ENCODE measurements at regions of chr9 and their contacts with region 1.

Region 1: GRCh38 chr9:100028201-100028784 is 70.5 kb downstream of the ERP44 start:
- DNase-seq: peak; percentile 60
- H3K4me3 Mint-ChIP-seq: no peak overlapping the region
- H3K27ac Mint-ChIP-seq: no peak overlapping the region
- H3K4me1 Mint-ChIP-seq: no peaks in the 10 kb centered on the region
- H3K27me3 Mint-ChIP-seq: no peaks in the 10 kb centered on the region
- CTCF ChIP-seq: peak; percentile 69

Region 2: DNA sequence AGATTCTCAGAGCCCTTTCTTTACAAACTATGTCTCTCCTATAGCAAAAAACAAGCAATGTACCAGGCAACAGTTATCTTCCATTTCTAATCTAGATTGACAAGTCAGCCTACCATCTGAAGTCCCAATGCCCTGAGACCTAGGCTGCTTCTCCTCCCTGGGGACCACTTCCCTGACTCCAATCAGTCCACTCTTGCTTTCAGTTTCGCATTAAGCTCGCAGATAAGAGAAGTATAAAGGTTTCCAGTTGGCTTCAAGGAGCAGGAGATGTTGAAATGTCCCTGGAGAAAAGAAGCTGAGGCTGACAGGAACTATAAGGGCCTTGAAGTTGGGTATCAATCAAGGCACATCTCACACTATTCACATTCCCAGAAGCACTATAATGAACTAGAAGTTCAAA is 38.2 kb after region 1 on chr9:
- CTCF ChIA-PET with region 1: no interaction called
- intact Hi-C with region 1: no loop called
- DNase-seq: no peak
- H3K4me3 Mint-ChIP-seq: no peak overlapping the region
- H3K27ac Mint-ChIP-seq: no peak overlapping the region
- H3K4me1 Mint-ChIP-seq: no peaks in the 10 kb centered on the region
- H3K27me3 Mint-ChIP-seq: no peaks in the 10 kb centered on the region
- CTCF ChIP-seq: no peak

Region 3: GRCh38 chr9:100098887-100099721 is 70.8 kb after region 1 on chr9 and contains the starts of genes ERP44 and INVS:
- CTCF ChIA-PET with region 1: no interaction called
- intact Hi-C with region 1: loop called (anchors 5 kb)
- DNase-seq: peak; percentile 95
- H3K4me3 Mint-ChIP-seq: peak within 1 kb of the TSS; percentile 98
- H3K27ac Mint-ChIP-seq: peak within 1 kb of the TSS; percentile 94
- H3K4me1 Mint-ChIP-seq: peaks cover 11% of the 10 kb centered on the region
- H3K27me3 Mint-ChIP-seq: no peaks in the 10 kb centered on the region
- CTCF ChIP-seq: no peak
- total RNA-seq, gene ERP44: 12.3 and 13.2 TPM in 2 replicates
- total RNA-seq, gene INVS: 12.4 and 14.2 TPM in 2 replicates

Region 4: DNA sequence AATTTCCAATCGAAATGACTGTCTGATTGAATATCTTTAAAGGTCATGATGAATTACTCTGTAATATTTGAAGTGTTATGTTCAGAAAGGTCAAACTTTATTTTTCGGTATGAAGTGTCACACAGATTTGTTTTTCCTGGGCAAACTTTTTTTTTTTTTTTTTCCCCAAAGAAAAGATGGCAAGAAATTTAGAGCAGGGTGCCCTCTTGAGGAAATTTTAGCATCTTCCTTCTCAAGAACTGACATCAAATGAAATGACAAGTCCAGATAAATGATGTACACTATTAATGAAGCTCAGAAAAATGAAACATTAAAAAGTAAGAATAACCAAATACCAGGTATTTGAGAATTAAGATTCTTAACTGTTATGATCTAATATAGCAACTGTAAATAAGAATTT is 194.4 kb after region 1 on chr9:
- CTCF ChIA-PET with region 1: no interaction called
- intact Hi-C with region 1: loop called (anchors 1 kb)
- DNase-seq: no peak
- H3K4me3 Mint-ChIP-seq: no peak overlapping the region
- H3K27ac Mint-ChIP-seq: no peak overlapping the region
- H3K4me1 Mint-ChIP-seq: no peaks in the 10 kb centered on the region
- H3K27me3 Mint-ChIP-seq: no peaks in the 10 kb centered on the region
- CTCF ChIP-seq: no peak

Region 5: GRCh38 chr9:100322954-100323536 is 294.8 kb after region 1 on chr9:
- CTCF ChIA-PET with region 1: no interaction called
- intact Hi-C with region 1: loop called (anchors 5 kb)
- DNase-seq: peak; percentile 2
- H3K4me3 Mint-ChIP-seq: no peak overlapping the region
- H3K27ac Mint-ChIP-seq: no peak overlapping the region
- H3K4me1 Mint-ChIP-seq: no peaks in the 10 kb centered on the region
- H3K27me3 Mint-ChIP-seq: no peaks in the 10 kb centered on the region
- CTCF ChIP-seq: peak; percentile 16

Region 6: DNA sequence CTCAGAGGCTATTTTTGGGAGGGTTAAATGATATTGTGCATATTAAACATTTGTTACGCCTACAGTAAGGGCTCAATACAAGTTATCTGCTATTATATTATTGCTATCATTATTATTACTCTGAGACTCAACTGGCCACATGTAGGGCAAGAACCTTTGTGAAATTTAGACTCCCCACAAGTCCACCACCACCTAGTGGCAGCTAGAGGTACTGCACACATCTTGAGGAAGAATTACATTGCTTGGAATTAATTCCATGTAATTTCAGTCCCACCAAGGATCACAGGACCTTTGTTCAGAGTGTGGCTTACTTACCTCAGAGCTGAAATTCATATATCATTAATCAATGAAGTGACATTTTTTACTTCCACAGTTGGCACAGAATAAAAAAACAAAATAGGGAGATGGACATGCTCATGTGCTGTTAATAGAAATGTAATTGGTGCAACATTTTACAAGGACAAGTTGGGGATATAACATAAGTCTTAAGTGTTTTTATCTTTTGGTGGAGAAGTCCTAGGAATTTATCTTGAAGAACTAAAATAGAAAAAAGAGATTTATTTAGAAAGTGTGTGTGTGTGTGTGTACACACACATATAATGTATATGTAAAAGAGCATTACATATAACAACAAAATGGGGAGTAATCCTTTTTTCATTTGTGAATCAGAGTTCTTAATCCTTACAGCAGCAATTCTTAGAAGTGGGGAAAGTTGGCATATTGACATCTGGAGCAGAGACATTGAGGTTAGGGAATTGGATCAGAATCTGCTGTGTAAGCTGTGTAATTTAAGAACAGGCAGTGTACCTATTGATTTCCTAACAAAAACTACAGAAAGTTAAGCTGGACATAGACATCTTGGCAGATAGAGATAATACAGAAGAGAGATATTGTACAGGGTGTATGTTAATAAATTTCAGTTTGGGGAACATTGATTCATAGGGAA is 409.8 kb after region 1 on chr9:
- CTCF ChIA-PET with region 1: no interaction called
- intact Hi-C with region 1: no loop called
- DNase-seq: peak; percentile 70
- H3K4me3 Mint-ChIP-seq: no peak overlapping the region
- H3K27ac Mint-ChIP-seq: no peak overlapping the region
- H3K4me1 Mint-ChIP-seq: peaks cover 11% of the 10 kb centered on the region
- H3K27me3 Mint-ChIP-seq: no peaks in the 10 kb centered on the region
- CTCF ChIP-seq: peak; percentile 65

Measured in Calu3 (cell line).